Activated B cell treated with CpG ODN at 0.5 μM for 24 hours (primary cell): ENCODE measurements at regions of chr1 and their contacts with region 1.

Region 1: DNA sequence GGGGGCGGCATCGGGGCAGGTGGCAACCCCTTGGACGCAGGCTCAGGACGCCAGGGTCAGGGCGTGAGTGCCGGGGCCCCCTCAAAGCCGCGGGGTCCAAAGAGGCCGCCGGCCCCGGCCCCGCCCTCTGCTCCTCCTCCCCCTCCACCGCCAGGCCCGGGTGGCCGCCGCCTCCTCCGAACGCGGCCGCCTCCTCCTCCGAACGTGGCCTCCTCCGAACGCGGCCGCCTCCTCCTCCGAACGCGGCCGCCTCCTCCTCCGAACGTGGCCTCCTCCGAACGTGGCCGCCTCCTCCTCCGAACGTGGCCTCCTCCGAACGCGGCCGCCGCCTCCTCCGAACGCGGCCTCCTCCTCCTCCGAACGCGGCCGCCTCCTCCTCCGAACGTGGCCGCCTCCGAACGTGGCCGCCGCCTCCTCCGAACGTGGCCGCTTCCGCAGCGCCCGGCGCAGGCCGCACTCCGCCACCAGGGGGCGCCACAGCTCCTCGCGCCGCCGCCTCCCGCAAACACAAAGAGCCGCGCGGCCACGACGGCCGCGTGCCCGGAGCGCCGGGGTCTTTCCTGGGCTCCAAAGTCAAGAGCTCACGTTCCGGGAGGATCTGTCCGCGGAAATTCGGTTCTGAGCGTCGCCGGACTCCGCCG is 19.3 kb upstream of the SAMD11 start:
- DNase-seq: peak; percentile 79
- ATAC-seq: peak; percentile 70
- H3K4me3 Mint-ChIP-seq: peak overlapping the region; percentile 79
- H3K27ac Mint-ChIP-seq: peak overlapping the region; percentile 69
- H3K4me1 Mint-ChIP-seq: peaks cover 16% of the 10 kb centered on the region
- H3K27me3 Mint-ChIP-seq: peaks cover 28% of the 10 kb centered on the region
- CTCF ChIP-seq: no peak

Region 2: GRCh38 chr1:921011-921837 is 16.8 kb after region 1 on chr1:
- CTCF ChIA-PET with region 1: interaction called, 3 read pairs
- POLR2A ChIA-PET with region 1: no interaction called
- intact Hi-C with region 1: loop called (anchors 2 kb)
- DNase-seq: no peak
- ATAC-seq: peak; percentile 55
- H3K4me3 Mint-ChIP-seq: peak overlapping the region; percentile 19
- H3K27ac Mint-ChIP-seq: peak overlapping the region; percentile 6
- H3K4me1 Mint-ChIP-seq: peaks cover 21% of the 10 kb centered on the region
- H3K27me3 Mint-ChIP-seq: peaks cover 42% of the 10 kb centered on the region
- CTCF ChIP-seq: no peak

Region 3: GRCh38 chr1:941588-942383 is 37.4 kb after region 1 on chr1:
- CTCF ChIA-PET with region 1: interaction called, 3 read pairs
- POLR2A ChIA-PET with region 1: interaction called, 6 read pairs
- intact Hi-C with region 1: loop called (anchors 5 kb)
- DNase-seq: peak; percentile 41
- ATAC-seq: peak; percentile 33
- H3K4me3 Mint-ChIP-seq: peak overlapping the region; percentile 80
- H3K27ac Mint-ChIP-seq: no peak overlapping the region
- H3K4me1 Mint-ChIP-seq: peaks cover 11% of the 10 kb centered on the region
- H3K27me3 Mint-ChIP-seq: peaks cover 19% of the 10 kb centered on the region
- CTCF ChIP-seq: no peak

Region 4: DNA sequence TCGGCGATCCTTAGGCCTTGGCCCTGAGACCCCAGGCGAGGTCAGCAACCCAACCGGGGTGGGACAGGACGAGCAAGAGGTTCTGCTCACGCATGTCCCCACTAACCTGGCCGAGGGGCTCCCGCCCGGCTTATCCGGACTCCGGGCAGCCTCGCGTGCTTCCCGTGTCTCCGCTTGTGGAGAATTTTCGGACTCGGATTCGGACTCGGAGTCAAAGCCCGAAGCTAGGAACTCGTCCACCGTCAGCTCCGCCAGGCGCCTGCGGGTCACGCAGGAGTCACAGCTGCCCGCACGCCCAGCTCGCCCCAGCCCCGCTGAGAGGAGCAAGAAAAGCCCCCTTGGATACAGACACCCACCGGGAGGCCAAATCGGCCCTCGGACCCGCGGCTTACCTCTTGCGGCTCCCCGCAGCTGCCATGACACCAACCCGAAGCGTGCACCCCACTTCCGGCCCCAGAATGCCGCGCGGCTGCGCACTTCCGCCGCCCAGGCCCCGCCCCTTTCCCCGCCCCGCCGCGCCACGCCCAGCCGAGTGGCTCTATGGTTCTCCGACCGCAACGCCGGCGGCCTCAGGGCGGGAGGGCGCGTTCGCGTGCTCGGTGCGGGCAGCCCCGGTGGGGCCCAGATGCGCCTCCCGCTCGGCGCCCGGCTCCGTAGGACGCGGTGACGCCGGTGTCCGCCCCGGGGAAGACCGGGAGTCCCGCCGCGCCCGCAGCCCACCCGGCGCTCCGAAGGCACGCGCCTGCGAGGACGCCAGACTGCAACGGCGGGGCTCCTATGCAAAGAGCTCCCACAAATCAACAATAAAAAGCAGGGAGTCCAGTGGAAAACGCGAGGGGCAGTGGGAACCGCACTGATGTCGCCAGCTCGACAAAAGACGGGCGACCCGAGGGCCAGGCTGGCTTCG is 54.6 kb after region 1 on chr1 and contains the start of gene NOC2L:
- CTCF ChIA-PET with region 1: no interaction called
- POLR2A ChIA-PET with region 1: interaction called, 9 read pairs
- intact Hi-C with region 1: loop called (anchors 5 kb)
- DNase-seq: peak; percentile 95
- ATAC-seq: peak; percentile 90
- H3K4me3 Mint-ChIP-seq: peak within 1 kb of the TSS; percentile 89
- H3K27ac Mint-ChIP-seq: peak within 1 kb of the TSS; percentile 56
- H3K4me1 Mint-ChIP-seq: peaks cover 28% of the 10 kb centered on the region
- H3K27me3 Mint-ChIP-seq: no peaks in the 10 kb centered on the region
- CTCF ChIP-seq: no peak
- total RNA-seq, gene NOC2L: 95.5 and 96.8 TPM in 2 replicates

Region 5: DNA sequence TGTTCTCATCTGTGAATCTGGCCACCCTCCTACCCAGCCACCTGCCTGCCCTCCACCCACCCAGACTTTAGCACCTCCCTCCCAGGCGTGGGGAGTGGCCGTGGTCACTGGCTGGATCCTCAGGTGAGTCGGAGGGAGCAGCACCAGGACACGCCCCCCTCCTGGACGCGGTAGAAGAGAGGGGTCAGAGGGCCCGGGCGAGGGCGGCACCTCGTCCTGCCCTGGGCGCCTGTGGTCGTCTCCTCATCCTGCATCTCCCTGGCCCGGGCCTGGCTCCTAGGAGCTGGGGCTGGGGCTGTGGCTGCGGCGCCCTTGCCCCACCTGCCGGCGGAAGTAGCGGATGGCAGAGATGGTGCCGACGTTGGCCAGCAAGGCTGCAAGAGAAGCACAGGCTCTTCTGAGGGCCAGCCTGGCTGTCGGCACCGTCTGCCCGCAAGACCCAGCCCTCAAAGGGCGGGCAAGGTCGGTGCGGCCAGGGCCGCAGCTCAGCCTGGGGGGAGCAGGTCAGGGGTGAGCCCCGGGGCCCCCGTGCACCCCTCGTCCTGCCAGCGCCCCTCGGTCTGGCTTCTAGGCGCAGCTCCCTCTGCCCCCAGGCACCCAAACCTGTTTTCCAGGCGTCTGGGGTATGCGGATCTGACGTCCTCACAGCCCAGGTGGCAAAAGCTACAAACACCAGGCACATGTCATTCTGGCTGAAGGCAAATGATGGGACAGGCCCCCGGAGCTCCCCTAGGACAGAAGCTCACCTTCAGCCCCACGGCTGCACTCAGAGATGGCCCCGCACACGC is 71.7 kb after region 1 on chr1:
- CTCF ChIA-PET with region 1: interaction called, 10 read pairs
- POLR2A ChIA-PET with region 1: no interaction called
- intact Hi-C with region 1: loop called (anchors 1 kb)
- DNase-seq: peak; percentile 64
- ATAC-seq: peak; percentile 90
- H3K4me3 Mint-ChIP-seq: no peak overlapping the region
- H3K27ac Mint-ChIP-seq: no peak overlapping the region
- H3K4me1 Mint-ChIP-seq: peaks cover 4% of the 10 kb centered on the region
- H3K27me3 Mint-ChIP-seq: peaks cover 24% of the 10 kb centered on the region
- CTCF ChIP-seq: no peak